Heart left ventricle (tissue), 16 donors: ENCODE measurements at regions of chr5 and their contacts with region 1.

Region 1: DNA sequence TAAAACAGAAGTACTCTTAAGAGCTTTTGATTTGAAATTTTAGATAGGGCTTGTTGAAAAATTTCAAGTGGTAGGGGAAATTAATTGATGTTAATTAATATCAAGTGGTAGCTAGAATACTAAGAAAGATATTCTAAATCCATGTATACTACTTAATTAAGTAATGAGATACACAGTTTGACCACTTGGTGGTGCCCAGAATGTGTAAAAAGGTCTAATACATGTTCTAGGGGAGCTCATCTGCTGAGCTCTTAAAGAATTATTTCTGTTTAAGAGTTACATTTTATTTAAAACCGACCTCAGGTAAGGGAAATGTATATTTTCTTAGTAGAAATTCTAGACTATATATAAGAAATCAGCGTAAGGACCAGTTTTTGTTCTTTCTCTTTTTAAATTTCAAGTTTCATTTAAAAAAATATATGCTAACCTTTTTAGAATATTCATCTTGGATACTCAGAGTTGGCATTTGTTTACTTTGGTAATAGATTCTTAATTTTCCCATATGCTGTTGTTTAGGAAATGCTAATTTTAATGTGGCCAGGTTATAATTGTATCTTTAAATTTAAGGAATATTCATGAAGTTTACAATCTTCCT is 61.5 kb downstream of the LNPEP start:
- DNase-seq: no peak
- ATAC-seq: peak in 1 of 4 donors; percentile 61
- H3K4me3 ChIP-seq: no peak overlapping the region
- H3K27ac ChIP-seq: no peak overlapping the region
- H3K4me1 ChIP-seq: no peaks in the 10 kb centered on the region
- H3K27me3 ChIP-seq: no peaks in the 10 kb centered on the region
- CTCF ChIP-seq: peak in 11 of 12 donors; percentile 27 to 66 (median 49)
- POLR2A ChIP-seq: no peak

Region 2: DNA sequence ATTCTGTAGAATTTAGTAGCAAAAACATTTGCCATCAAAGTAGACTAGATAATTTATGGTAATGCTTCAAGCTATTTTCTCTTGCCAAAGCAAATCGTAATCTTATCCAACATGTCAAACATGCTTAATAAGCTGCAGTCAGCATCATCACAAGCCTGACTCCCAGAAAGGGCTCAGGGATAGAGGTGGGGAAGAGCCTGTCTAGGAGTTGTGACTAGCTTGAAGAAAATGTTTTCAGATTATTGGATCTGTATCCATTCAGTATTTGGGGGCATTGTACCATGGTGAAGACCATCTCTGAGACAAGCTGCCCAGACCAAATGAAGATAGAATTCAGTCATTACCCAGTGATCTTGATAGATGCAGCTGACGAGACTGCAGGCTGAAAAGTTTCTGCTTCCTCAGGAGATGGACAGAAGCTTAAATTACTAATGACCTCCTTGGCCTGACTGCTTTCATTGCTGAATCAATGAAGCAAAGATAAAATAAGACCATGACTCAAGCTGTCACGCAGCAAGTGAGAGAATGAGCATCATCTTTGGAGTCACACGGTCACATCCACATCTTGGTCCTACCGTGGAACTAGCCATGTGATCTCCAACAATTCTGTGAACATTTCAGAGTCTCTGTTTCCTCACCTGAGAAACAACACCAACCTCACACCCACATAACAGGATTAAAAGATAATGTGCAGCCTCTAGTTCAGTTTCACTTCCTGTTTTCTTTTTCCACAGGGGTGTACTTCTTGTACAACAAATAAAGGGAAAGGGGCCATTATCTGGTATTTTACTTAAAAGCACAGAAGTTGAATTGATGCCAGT is 111.6 kb before region 1 on chr5:
- intact Hi-C with region 1: loop called in 1 of 10 experiments (anchors 10 kb)
- DNase-seq: no peak
- ATAC-seq: peak in 1 of 4 donors; percentile 32
- H3K4me3 ChIP-seq: no peak overlapping the region
- H3K27ac ChIP-seq: peak overlapping the region in 1 of 12 donors; percentile 24
- H3K4me1 ChIP-seq: peaks cover 0 to 47% (median 5%) of the 10 kb centered on the region in 12 donors
- H3K27me3 ChIP-seq: no peaks in the 10 kb centered on the region
- CTCF ChIP-seq: no peak
- POLR2A ChIP-seq: no peak

Region 3: DNA sequence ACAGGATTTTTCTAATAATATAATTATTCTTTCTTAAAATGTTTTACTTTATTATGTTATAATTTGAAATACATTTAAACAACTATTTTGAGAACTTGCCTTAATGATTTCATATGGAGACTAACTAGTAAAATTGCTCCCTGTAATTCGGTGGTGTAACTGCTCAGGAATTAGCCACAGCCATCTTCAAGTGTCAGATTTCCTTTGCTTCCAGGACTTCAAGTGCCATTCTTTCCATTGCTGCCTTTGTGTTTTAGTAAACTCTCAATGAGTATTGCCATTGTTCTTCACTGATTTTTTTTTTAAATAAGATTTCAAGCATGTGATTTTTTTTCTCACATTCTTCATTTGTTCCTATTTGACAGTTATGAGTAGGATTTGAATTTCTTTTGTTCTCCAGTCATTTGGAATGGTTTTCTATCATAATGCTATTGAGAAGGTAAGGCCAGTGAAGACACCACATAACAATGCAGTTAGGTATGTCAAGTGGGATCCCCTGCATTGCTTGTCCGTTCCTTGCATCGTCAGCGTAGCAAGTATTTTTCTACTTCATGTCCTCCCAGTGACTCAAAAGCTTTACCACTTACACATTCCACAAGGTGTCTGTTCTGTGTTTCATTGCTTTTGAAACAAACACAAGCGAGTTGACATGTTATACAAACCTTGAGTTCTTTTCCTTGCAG is 22.2 kb after region 1 on chr5:
- intact Hi-C with region 1: no loop called
- DNase-seq: no peak
- ATAC-seq: no peak
- H3K4me3 ChIP-seq: no peak overlapping the region
- H3K27ac ChIP-seq: peak overlapping the region in 1 of 12 donors; percentile 18
- H3K4me1 ChIP-seq: no peaks in the 10 kb centered on the region
- H3K27me3 ChIP-seq: no peaks in the 10 kb centered on the region
- CTCF ChIP-seq: no peak
- POLR2A ChIP-seq: no peak